Caco-2 (cell line): ENCODE measurements at regions of chr10 and their contacts with region 1.

Region 1: GRCh38 chr10:60444494-60445064 is 54.9 kb upstream of the ANK3 start:
- DNase-seq: peak in 1 of 2 experiments; percentile 27
- H3K4me3 ChIP-seq: no peak overlapping the region
- H3K4me3 Mint-ChIP-seq: no peak overlapping the region
- H3K27ac Mint-ChIP-seq: no peak overlapping the region
- H3K4me1 ChIP-seq: peaks cover 19% of the 10 kb centered on the region
- H3K4me1 Mint-ChIP-seq: peaks cover 21% of the 10 kb centered on the region
- H3K27me3 ChIP-seq: no peaks in the 10 kb centered on the region
- H3K27me3 Mint-ChIP-seq: no peaks in the 10 kb centered on the region
- CTCF ChIP-seq: peak; percentile 69 to 76

Region 2: DNA sequence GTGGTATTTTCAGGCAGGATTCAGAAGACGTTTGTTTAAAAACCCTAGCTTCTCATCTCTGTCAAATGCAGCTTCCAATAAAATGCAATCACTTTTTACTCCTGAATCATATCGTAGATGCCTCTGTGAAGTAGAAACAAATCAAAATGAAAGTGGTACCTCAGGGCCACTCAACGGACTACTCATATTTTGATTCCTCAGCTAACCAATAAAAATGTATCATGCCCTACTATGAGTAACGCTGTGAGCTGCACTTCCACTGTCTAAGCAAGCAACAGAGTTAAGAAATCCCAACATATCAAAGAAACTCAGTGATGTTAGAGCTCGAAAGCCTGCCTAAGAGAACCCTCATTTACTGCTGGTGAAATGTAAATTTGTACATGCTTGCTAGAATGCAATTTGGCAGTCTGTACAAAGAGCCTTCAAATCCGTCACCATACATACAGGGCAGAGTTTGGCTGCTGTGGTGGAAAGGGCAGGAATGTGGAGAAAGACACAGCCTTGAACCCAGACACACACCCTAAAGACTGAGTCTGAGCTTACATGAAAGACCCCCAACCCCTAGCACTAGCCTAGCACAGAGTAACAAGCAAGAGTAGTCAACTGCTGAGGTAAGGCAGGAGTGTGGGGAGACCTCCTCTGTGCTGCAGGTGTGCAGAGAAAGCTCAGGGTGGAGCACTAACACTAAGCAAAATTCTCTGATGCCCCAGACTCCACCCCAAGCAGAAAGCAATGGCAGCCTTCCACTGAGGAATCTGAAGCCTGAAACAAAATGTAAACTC is 206.4 kb before region 1 on chr10:
- CTCF ChIA-PET with region 1: interaction called, 15 read pairs
- POLR2A ChIA-PET with region 1: no interaction called
- intact Hi-C with region 1: no loop called
- DNase-seq: peak; percentile 68 to 78
- H3K4me3 ChIP-seq: no peak overlapping the region
- H3K4me3 Mint-ChIP-seq: no peak overlapping the region
- H3K27ac Mint-ChIP-seq: no peak overlapping the region
- H3K4me1 ChIP-seq: no peaks in the 10 kb centered on the region; the same call in 1 of the 2 replicates
- H3K4me1 Mint-ChIP-seq: peaks cover 16% of the 10 kb centered on the region
- H3K27me3 ChIP-seq: no peaks in the 10 kb centered on the region
- H3K27me3 Mint-ChIP-seq: no peaks in the 10 kb centered on the region
- CTCF ChIP-seq: peak; percentile 63 to 91

Region 3: GRCh38 chr10:60335708-60336107 is 108.9 kb before region 1 on chr10:
- CTCF ChIA-PET with region 1: no interaction called
- POLR2A ChIA-PET with region 1: no interaction called
- intact Hi-C with region 1: no loop called
- DNase-seq: peak in 1 of 2 experiments; percentile 40
- H3K4me3 ChIP-seq: no peak overlapping the region
- H3K4me3 Mint-ChIP-seq: no peak overlapping the region
- H3K27ac Mint-ChIP-seq: no peak overlapping the region
- H3K4me1 ChIP-seq: 0 out of 2 replicates have a peak, but pooled peaks cover 5% of the 10 kb centered on the region
- H3K4me1 Mint-ChIP-seq: peaks cover 16% of the 10 kb centered on the region
- H3K27me3 ChIP-seq: no peaks in the 10 kb centered on the region
- H3K27me3 Mint-ChIP-seq: no peaks in the 10 kb centered on the region
- CTCF ChIP-seq: peak; percentile 62 to 70

Region 4: DNA sequence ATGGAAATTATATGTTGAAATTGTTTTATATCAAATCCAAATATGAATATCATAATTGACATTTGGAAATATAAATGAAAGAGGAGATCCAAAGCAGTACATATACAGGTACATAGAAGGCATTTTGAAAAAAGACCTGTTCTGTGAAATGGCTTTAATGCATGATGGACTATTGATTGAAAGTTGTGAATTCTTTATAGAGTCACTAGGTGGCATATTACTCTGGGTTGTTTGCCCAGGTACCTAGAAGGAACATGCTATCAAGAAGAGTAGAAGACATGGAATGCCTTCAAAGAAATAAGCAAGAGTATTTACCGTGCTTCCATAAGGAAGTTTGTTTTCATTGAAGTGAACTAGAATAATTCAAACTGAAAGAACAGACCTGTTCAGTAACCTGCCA is 105.1 kb after region 1 on chr10:
- CTCF ChIA-PET with region 1: interaction called, 3 read pairs
- POLR2A ChIA-PET with region 1: no interaction called
- intact Hi-C with region 1: loop called (anchors 1 kb)
- DNase-seq: peak in 1 of 2 experiments; percentile 45
- H3K4me3 ChIP-seq: no peak overlapping the region
- H3K4me3 Mint-ChIP-seq: no peak overlapping the region
- H3K27ac Mint-ChIP-seq: no peak overlapping the region
- H3K4me1 ChIP-seq: no peaks in the 10 kb centered on the region
- H3K4me1 Mint-ChIP-seq: no peaks in the 10 kb centered on the region
- H3K27me3 ChIP-seq: no peaks in the 10 kb centered on the region
- H3K27me3 Mint-ChIP-seq: no peaks in the 10 kb centered on the region
- CTCF ChIP-seq: peak; percentile 66 to 76

Region 5: DNA sequence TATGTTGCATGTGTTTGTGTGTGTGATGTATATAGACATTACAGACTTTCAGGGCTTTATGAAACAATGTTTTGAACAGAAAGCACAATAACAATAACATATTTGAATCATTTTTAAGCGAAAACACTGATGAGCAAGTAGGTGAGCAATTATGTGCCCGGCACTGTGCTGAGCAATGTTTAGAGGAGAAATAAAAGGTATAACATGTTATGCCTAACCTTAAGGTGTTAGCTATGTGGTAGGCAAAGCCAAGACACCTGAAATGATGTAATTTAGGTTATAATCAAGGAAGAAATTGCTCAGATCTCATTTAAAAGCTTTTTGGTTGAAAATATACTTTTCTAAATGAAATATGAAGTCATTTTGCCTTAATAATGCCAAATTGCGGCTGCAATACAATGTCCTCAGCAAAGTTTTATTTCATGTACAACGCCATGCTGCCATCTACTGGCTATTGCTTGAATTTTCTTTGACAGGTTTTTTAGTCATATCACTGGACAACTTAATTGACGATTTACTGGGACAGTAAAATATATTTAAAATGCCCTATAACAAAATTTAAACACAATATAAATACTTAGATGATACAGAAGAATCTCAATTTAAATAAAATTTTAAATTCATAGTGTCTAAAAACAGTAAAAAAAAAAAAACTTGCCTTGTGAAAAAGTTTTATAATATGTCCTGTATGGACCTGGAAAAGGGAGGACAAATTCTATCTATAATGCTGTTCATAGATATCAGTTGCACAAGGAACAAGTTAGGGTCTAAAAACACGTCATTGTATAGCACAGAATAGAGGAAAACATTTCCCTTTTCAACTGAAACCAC is 202.6 kb after region 1 on chr10:
- CTCF ChIA-PET with region 1: interaction called, 15 read pairs
- POLR2A ChIA-PET with region 1: interaction called, 4 read pairs
- intact Hi-C with region 1: loop called (anchors 1 kb)
- DNase-seq: peak; percentile 52 to 77
- H3K4me3 ChIP-seq: no peak overlapping the region
- H3K4me3 Mint-ChIP-seq: no peak overlapping the region
- H3K27ac Mint-ChIP-seq: no peak overlapping the region
- H3K4me1 ChIP-seq: peaks cover 39% of the 10 kb centered on the region
- H3K4me1 Mint-ChIP-seq: peaks cover 35% of the 10 kb centered on the region
- H3K27me3 ChIP-seq: no peaks in the 10 kb centered on the region
- H3K27me3 Mint-ChIP-seq: no peaks in the 10 kb centered on the region
- CTCF ChIP-seq: peak; percentile 82 to 97

Region 6: GRCh38 chr10:60964257-60965235 is 520.0 kb after region 1 on chr10:
- CTCF ChIA-PET with region 1: no interaction called
- POLR2A ChIA-PET with region 1: no interaction called
- intact Hi-C with region 1: loop called (anchors 10 kb)
- DNase-seq: peak; percentile 70 to 78
- H3K4me3 ChIP-seq: no peak overlapping the region
- H3K4me3 Mint-ChIP-seq: no peak overlapping the region
- H3K27ac Mint-ChIP-seq: no peak overlapping the region
- H3K4me1 ChIP-seq: no peaks in the 10 kb centered on the region
- H3K4me1 Mint-ChIP-seq: no peaks in the 10 kb centered on the region
- H3K27me3 ChIP-seq: no peaks in the 10 kb centered on the region
- H3K27me3 Mint-ChIP-seq: peaks cover 2% of the 10 kb centered on the region
- CTCF ChIP-seq: peak; percentile 96 to 98